Mammary epithelial cell (primary cell): ENCODE measurements at regions of chr15 and their contacts with region 1.

Region 1: DNA sequence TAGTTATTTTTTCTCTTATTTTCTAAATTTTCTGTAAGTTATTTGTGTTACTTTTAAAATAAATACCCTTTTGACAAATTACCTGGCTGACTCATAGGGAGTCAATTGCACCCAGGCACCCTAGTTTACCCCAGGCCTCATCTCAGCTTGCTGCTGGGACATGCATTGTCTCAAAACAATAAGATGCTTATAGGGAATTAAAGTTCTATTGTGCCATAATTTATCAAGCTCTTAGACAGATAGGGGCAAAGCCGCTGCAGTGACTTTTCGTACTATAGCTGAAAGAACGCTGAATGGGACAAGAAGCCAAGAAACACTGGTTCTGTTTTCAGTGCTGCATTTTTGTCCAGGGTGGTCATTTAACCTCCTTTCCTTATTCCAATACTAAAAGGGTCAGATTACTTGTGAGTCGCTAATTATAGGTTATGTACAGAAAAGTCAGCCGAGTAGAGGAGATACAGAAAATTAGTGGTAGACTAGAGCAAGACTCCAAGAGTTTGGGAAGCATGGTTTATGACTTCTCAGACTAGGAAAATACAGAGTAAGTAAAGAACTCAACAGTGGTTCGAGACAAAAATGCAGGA is 50.3 kb downstream of the EXD1 start:
- DNase-seq: no peak
- H3K4me3 ChIP-seq: no peak overlapping the region
- H3K27ac ChIP-seq: no peak overlapping the region
- H3K4me1 ChIP-seq: no peaks in the 10 kb centered on the region
- H3K27me3 ChIP-seq: no peaks in the 10 kb centered on the region
- CTCF ChIP-seq: no peak

Region 2: DNA sequence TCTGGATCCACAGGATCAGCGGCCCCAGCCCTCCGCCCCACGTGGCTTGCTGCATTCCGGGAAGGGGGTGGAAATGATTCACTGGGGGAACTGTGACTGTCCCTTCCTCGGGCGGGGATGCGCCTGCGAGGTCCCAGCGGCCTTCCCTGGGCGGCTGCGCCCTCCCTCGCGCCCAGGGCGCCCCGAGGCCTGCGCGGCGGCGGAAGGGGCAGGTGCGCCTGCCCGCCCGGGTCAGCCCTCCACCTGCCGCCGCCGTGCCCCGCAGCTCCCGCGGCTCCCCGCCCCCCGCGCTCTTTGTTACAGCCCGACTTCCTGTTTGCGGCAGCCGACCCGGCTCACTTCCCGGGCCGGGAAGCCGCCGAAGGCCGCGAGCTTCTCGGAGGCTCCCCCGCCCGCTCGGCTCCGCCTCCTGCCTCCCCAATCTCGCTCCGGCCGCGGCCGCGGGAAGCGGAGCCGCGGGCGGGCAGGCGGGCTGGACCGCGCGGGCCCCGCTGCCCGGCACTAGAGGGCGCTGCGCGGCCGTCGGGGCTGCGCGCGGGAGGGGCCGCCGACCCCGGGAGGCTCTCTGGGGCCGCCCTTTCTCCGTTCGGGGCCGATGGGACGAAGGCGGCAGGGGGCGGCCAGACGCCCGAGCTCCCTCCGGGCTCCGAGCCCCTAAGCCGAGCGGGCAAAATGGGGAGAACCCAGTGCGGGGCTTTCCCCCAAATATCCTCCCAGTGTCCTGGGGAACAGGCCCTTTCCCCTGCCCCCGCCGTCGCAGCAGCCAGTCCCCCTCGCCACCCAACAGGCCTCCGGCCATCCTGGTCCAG is 238.6 kb before region 1 on chr15:
- CTCF ChIA-PET with region 1: no interaction called
- dilution Hi-C with region 1: no loop called
- in situ Hi-C with region 1: no loop called
- intact Hi-C with region 1: loop called (anchors 2 kb)
- DNase-seq: peak; percentile 65
- H3K4me3 ChIP-seq: peak overlapping the region; percentile 37 to 49 (median 46)
- H3K27ac ChIP-seq: no peak overlapping the region
- H3K4me1 ChIP-seq: peaks cover 12% of the 10 kb centered on the region
- H3K27me3 ChIP-seq: no peaks in the 10 kb centered on the region
- CTCF ChIP-seq: peak; percentile 38 to 46

Region 3: GRCh38 chr15:41022487-41023090 is 157.7 kb before region 1 on chr15:
- CTCF ChIA-PET with region 1: no interaction called
- dilution Hi-C with region 1: no loop called
- in situ Hi-C with region 1: no loop called
- intact Hi-C with region 1: loop called (anchors 5 kb)
- DNase-seq: peak; percentile 16
- H3K4me3 ChIP-seq: no peak overlapping the region
- H3K27ac ChIP-seq: no peak overlapping the region
- H3K4me1 ChIP-seq: no peaks in the 10 kb centered on the region
- H3K27me3 ChIP-seq: no peaks in the 10 kb centered on the region
- CTCF ChIP-seq: peak; percentile 61 to 74

Region 4: DNA sequence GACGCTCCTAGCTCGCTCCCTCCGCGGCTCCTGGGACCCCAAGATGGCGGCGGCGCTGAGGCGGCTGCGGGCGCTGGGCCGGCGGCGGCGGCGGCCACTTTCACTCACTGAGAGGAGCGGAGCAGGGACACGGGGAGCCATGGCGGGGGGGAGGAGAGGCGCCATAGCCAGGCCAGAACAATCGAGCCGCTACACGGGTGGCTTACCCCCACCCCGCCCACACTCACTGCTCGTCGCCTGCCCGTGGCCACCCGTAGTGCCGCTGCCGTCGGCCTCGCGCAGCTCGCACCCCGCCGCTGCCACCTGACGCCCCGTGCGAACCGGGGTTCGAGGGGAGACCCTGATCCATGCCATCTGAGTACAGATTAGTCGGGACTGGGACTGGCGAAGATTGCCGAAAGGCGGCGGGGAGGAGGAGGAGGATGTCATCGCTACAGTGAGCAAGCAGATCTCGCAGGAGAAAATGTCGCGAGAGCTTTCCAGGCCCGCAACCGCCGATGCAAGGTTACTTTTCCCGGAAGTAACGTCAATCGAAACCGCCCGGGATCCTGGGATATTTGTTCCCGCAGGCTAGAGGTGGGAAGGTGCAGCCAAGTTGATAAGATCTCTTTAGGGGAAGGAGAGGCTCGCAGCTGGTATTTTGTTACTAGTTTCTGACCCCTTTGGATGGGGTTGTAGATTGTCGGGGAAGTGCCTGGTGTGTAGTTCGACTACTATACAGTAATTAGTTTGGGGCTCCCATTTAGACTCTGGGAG is 64.0 kb before region 1 on chr15 and contains the start of gene INO80:
- CTCF ChIA-PET with region 1: no interaction called
- dilution Hi-C with region 1: no loop called
- in situ Hi-C with region 1: no loop called
- intact Hi-C with region 1: loop called (anchors 2 kb)
- DNase-seq: peak; percentile 98
- H3K4me3 ChIP-seq: peak within 1 kb of the TSS; percentile 84 to 92 (median 89)
- H3K27ac ChIP-seq: peak within 1 kb of the TSS; percentile 100
- H3K4me1 ChIP-seq: peaks cover 9% of the 10 kb centered on the region
- H3K27me3 ChIP-seq: no peaks in the 10 kb centered on the region
- CTCF ChIP-seq: no peak
- total RNA-seq, gene INO80: 14.0 to 28.0 TPM

Region 5: GRCh38 chr15:41331833-41332787 is 151.8 kb after region 1 on chr15 and contains the start of gene OIP5:
- CTCF ChIA-PET with region 1: no interaction called
- dilution Hi-C with region 1: no loop called
- in situ Hi-C with region 1: no loop called
- intact Hi-C with region 1: loop called (anchors 5 kb)
- DNase-seq: peak; percentile 100
- H3K4me3 ChIP-seq: peak within 1 kb of the TSS; percentile 59 to 100 (median 74)
- H3K27ac ChIP-seq: peak within 1 kb of the TSS; percentile 85
- H3K4me1 ChIP-seq: peaks cover 14% of the 10 kb centered on the region
- H3K27me3 ChIP-seq: no peaks in the 10 kb centered on the region
- CTCF ChIP-seq: peak; percentile 73 to 84
- total RNA-seq, gene OIP5: 1.3 to 8.0 TPM